Activated CD4-positive, alpha-beta memory T cell treated with anti-CD3 and anti-CD28 coated beads for 36 hours (primary cell): ENCODE measurements at regions of chr10 and their contacts with region 1.

Region 1: DNA sequence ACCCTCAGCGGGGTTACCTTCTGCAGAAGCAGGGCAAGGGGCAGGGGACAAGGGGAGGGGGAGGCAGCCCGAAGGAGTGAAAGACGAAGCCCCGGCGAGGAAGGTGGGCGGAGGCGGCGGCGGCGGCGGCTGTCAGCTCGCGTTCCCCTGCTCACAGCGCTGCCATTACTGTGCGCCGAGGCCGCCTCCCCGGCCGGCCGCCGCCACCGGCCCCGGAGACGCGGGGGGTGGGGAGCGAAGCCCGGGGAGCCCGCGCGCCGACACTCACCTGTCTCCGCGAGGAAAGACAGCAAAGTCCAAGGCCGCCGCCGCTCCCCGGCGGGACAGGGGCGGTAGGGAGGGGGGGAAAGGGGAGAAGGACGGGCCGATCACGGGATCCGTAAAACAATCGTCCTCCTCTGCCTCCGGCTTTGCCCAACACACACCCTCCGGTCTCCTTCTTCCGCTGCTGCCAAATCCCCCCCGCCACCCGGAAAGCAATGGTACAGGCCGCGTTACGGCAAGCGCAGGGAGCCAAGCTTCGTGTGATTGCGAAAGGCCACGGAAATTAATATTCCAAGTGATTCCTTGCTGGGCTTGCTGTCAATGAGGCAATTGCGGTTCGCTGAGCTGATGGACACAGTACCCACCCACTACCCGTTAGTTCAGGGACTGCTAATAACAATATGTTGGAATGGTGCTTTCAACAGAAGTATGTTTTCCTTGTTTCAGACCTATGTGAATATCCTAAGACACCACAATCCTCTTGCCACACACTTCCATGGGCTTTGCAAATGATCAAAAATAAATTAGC is at the start of gene CUL2:
- DNase-seq: peak; percentile 94
- H3K4me3 Mint-ChIP-seq: peak within 1 kb of the TSS; percentile 95
- H3K27ac Mint-ChIP-seq: peak within 1 kb of the TSS; percentile 94
- H3K4me1 Mint-ChIP-seq: peaks cover 50% of the 10 kb centered on the region
- H3K27me3 Mint-ChIP-seq: no peaks in the 10 kb centered on the region
- total RNA-seq, gene CUL2: 39.7 to 43.3 TPM

Region 2: DNA sequence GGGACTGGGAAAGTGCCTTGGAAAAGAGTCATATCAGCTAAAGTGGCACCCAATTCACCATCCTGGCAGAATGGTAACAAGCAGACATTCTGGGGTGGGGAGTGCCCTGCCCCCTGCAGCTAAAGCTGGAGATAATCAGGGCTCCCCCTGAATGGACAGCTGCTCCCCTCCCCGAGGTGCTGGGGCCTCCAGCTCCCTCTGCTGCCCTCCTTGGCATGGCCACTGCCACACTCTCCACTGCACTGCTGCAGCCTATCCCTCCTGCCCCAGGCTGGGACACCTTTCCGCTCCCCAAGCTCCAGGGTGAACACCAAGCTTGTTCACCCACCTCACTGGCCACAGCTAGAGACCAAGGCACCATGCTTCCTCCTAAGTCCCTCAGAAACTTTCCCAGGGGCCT is 265.5 kb before region 1 on chr10:
- CTCF ChIA-PET with region 1: no interaction called
- POLR2A ChIA-PET with region 1: no interaction called
- intact Hi-C with region 1: no loop called
- DNase-seq: no peak
- H3K4me3 Mint-ChIP-seq: no peak overlapping the region
- H3K27ac Mint-ChIP-seq: no peak overlapping the region
- H3K4me1 Mint-ChIP-seq: no peaks in the 10 kb centered on the region
- H3K27me3 Mint-ChIP-seq: peaks cover 6% of the 10 kb centered on the region

Region 3: DNA sequence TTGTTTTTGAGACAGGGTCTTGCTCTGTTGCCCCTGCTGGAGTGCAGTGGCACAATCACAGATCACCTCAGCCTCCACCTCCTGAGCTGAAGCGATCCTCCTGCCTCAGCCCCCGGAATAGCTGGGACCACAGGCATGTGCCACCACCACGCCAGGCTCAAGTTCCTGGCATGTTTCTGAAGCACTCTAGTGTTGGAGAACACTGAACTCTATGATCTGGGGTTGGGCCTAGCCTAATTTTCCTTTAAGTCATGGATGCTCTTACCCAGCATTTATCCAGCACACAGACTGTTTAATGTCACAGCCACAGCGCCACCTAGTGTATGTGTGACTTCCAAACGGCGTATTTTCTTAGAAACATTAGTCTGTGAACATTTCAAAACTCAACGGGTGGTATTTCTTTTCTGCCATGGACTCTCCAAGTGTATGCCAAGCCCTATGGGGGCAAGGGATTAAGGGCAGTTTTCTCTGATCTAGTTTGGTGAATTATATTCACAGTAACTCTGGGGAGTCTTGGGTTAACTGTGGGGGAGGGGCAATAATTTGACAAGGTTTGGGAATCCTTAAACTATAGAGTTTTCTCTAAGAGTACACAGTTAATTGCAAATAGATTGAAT is 128.1 kb after region 1 on chr10:
- CTCF ChIA-PET with region 1: no interaction called
- POLR2A ChIA-PET with region 1: no interaction called
- intact Hi-C with region 1: loop called (anchors 1 kb)
- DNase-seq: peak; percentile 90
- H3K4me3 Mint-ChIP-seq: peak overlapping the region; percentile 43
- H3K27ac Mint-ChIP-seq: peak overlapping the region; percentile 81
- H3K4me1 Mint-ChIP-seq: peaks cover 48% of the 10 kb centered on the region
- H3K27me3 Mint-ChIP-seq: no peaks in the 10 kb centered on the region

Region 4: GRCh38 chr10:35781643-35782035 is 691.3 kb after region 1 on chr10:
- CTCF ChIA-PET with region 1: no interaction called
- POLR2A ChIA-PET with region 1: no interaction called
- intact Hi-C with region 1: no loop called
- DNase-seq: no peak
- H3K4me3 Mint-ChIP-seq: no peak overlapping the region
- H3K27ac Mint-ChIP-seq: no peak overlapping the region
- H3K4me1 Mint-ChIP-seq: no peaks in the 10 kb centered on the region
- H3K27me3 Mint-ChIP-seq: peaks cover 7% of the 10 kb centered on the region